ENCODE measurements at regions of chr6 and their contacts with region 1.

Region 1: DNA sequence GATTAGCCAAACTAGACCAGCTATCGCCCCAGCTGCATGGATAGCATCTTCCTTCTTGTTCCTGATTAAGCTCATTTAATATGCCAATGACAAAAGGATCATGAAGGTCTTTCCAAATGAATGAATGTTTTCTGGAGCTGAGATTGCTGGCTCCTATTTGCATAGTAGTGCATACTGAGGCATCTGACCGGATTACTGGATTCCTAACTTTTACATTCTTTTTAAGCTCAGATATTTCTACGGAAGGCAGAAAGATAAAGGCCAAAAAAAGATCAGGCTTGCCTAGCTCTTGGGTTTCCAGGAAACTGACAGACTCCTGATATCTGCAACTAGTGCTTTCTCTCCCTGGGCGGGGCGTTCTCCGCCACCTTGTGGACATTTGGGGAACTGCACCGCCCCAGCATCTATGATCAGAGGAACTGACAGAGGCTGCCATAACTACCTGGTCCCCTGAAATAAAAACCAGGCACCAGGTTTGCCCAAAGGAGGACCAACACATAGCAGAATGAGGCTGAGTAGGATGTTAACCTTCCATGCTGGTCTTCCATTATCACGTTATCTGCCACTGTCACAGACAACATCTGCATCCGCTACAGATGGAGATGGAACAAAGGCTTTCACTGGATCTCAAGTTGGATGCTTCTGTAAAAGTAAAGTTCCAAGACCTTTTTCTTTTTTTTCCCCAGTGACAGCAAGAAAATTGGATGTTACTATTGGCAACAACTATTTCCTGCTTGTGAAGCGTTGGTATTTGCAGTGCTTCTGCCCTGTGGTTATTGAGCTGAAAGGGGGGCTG is 33.2 kb downstream of the NT5E start:
- DNase-seq: no peak
- H3K4me3 ChIP-seq: no peak overlapping the region
- H3K27ac ChIP-seq: no peak overlapping the region
- H3K4me1 ChIP-seq: peaks cover 3% of the 10 kb centered on the region
- H3K27me3 ChIP-seq: no peaks in the 10 kb centered on the region
- CTCF ChIP-seq: peak; percentile 86 to 99 (median 98)

Region 2: DNA sequence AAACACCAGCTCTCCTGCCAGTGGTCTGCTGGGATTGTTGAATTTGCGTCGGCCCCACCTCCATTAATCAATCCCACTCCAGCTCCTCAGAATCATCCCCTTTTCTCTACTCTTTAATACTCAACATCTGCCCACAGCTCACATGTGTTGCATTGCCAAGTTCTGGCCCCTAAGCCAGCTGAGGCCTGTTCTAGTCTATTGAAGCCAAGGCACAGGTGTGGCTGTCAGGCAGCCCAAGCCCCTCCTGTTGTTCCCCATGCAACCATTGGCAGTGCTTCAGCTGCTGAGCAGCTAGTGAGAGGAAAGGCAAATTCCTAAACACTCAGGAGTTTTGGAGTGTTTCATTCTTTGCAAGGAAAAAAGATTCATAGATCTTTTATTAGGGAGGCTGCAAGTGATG is 161.2 kb before region 1 on chr6:
- dilution Hi-C with region 1: no loop called
- DNase-seq: no peak
- H3K4me3 ChIP-seq: no peak overlapping the region
- H3K27ac ChIP-seq: no peak overlapping the region
- H3K4me1 ChIP-seq: no peaks in the 10 kb centered on the region
- H3K27me3 ChIP-seq: no peaks in the 10 kb centered on the region
- CTCF ChIP-seq: no peak

Region 3: GRCh38 chr6:85354761-85355618 is 128.1 kb before region 1 on chr6:
- dilution Hi-C with region 1: loop called (anchors 25 kb)
- DNase-seq: peak; percentile 57
- H3K4me3 ChIP-seq: no peak overlapping the region
- H3K27ac ChIP-seq: no peak overlapping the region
- H3K4me1 ChIP-seq: peaks cover 19% of the 10 kb centered on the region
- H3K27me3 ChIP-seq: no peaks in the 10 kb centered on the region
- CTCF ChIP-seq: peak; percentile 78 to 87 (median 82)

Measured in keratinocyte (primary cell).